ENCODE measurements at regions of chr6 and their contacts with region 1.

Region 1: DNA sequence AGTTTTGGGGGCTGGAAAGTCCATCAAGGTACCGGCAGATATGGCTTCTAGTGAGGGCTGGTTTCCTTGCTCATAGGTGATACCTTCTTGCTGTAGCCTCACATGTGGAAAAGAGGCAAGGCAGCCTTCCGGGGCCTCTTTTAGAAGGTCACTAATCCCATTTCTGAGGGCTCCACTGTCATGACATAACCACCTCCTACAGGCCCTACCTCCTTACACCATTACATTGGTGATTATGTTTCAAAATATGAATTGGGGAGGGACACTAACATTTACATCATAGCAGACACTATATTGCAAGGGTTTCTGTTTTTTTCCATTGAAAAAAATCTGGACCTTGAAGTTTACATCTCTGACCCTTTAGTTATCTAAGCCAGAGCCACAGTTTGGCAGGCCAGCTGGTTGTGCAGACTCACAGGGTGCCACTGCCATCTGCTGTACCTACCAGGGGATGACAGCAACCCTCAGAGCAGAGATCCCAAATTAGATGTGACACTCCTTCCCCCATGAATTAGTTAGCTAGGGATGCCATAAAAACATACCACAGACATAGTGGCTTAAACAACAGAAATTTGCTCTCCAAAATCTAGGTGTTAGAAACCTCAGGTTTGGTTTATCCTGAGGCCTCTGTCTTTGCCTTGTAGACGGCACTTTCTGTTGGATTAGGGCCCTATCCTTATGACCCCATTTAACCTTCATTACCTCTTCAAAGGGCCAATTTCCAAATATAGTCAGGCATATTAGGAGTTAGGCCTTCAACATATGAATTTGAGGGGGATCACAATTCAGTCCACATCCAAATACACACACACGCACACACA is 166.4 kb upstream of the RNF217 start:
- DNase-seq: peak; percentile 74
- H3K4me3 ChIP-seq: no peak overlapping the region
- H3K27ac ChIP-seq: no peak overlapping the region
- H3K4me1 ChIP-seq: peaks cover 45% of the 10 kb centered on the region
- H3K27me3 ChIP-seq: no peaks in the 10 kb centered on the region
- CTCF ChIP-seq: peak; percentile 87

Region 2: GRCh38 chr6:122869437-122870024 is 1926.3 kb before region 1 on chr6:
- CTCF ChIA-PET with region 1: interaction called, 3 read pairs
- POLR2A ChIA-PET with region 1: no interaction called
- intact Hi-C with region 1: loop called (anchors 10 kb)
- DNase-seq: peak; percentile 91
- H3K4me3 ChIP-seq: no peak overlapping the region
- H3K27ac ChIP-seq: peak overlapping the region; percentile 59
- H3K4me1 ChIP-seq: peaks cover 54% of the 10 kb centered on the region
- H3K27me3 ChIP-seq: no peaks in the 10 kb centered on the region
- CTCF ChIP-seq: peak; percentile 87

Region 3: DNA sequence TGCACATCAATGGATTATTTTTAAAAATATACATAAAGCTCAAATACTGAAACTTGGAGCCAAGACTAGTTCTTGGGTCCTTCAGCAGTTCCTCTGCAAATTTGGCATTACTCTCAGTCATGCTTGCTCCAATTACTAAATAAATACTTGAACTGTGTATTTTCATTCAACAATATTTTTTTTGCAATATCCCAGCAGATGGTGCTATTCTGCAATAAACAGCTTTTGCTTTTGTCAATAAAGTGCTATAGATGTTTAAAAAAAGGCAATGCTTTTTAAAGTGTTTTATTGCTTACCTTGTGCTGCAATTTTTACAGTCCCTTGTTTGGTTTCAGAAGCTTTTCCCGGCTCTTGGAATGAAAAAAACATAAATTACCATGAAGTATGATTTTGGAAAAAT is 1402.5 kb before region 1 on chr6:
- CTCF ChIA-PET with region 1: no interaction called
- POLR2A ChIA-PET with region 1: no interaction called
- intact Hi-C with region 1: loop called (anchors 5 kb)
- DNase-seq: peak; percentile 78
- H3K4me3 ChIP-seq: no peak overlapping the region
- H3K27ac ChIP-seq: peak overlapping the region; percentile 33
- H3K4me1 ChIP-seq: peaks cover 11% of the 10 kb centered on the region
- H3K27me3 ChIP-seq: no peaks in the 10 kb centered on the region
- CTCF ChIP-seq: peak; percentile 70

Region 4: DNA sequence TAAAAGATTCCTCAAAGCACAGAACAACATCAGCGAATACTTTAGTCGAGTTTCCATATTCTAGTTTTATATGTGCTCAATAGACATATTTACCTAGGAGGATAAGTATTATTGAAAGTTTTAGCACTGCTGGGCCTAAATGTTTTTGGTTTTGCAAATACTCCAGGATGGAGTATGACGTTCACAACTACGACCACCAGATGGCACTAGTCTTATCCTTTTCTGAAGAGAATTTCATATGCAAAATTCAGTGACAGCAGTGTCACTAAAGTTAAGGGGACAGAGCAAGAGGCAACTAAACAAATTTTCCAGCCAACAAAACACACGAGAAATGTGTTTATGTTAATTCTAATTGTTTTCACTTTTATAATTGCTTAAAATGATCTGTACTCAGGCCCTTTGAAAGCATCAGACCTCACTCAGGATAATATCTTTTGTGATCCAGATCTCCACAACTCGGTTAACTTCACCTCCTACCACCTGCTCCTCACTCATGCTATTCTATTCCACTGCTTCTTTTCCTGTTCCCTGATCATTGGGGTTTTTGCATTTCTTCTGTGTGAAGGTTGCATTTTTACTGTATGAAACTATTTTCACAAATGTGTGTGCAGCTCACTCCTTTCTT is 1379.9 kb before region 1 on chr6:
- CTCF ChIA-PET with region 1: no interaction called
- POLR2A ChIA-PET with region 1: no interaction called
- intact Hi-C with region 1: loop called (anchors 5 kb)
- DNase-seq: peak; percentile 82
- H3K4me3 ChIP-seq: no peak overlapping the region
- H3K27ac ChIP-seq: peak overlapping the region; percentile 39
- H3K4me1 ChIP-seq: peaks cover 3% of the 10 kb centered on the region
- H3K27me3 ChIP-seq: no peaks in the 10 kb centered on the region
- CTCF ChIP-seq: peak; percentile 80

Region 5: DNA sequence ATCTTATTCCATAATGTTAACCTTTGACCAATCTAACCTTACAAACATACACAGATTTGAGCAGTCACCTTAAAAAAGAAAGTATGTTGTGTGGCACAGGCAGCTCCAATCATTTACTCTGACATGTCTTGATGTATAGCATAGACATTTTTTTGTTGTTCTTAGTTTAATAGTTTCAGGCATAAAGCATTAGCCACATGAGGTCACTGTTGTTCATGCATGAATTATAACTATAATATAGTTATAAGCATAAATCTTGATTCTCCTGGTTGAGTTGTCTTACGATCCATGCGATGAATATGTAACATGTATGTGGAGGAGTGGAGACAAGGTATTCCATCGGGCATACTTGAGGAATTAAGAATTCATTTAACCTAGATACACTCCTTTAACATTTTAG is 1018.3 kb before region 1 on chr6:
- CTCF ChIA-PET with region 1: no interaction called
- POLR2A ChIA-PET with region 1: no interaction called
- intact Hi-C with region 1: loop called (anchors 2 kb)
- DNase-seq: peak; percentile 51
- H3K4me3 ChIP-seq: no peak overlapping the region
- H3K27ac ChIP-seq: no peak overlapping the region
- H3K4me1 ChIP-seq: peaks cover 22% of the 10 kb centered on the region
- H3K27me3 ChIP-seq: no peaks in the 10 kb centered on the region
- CTCF ChIP-seq: peak; percentile 56

Region 6: DNA sequence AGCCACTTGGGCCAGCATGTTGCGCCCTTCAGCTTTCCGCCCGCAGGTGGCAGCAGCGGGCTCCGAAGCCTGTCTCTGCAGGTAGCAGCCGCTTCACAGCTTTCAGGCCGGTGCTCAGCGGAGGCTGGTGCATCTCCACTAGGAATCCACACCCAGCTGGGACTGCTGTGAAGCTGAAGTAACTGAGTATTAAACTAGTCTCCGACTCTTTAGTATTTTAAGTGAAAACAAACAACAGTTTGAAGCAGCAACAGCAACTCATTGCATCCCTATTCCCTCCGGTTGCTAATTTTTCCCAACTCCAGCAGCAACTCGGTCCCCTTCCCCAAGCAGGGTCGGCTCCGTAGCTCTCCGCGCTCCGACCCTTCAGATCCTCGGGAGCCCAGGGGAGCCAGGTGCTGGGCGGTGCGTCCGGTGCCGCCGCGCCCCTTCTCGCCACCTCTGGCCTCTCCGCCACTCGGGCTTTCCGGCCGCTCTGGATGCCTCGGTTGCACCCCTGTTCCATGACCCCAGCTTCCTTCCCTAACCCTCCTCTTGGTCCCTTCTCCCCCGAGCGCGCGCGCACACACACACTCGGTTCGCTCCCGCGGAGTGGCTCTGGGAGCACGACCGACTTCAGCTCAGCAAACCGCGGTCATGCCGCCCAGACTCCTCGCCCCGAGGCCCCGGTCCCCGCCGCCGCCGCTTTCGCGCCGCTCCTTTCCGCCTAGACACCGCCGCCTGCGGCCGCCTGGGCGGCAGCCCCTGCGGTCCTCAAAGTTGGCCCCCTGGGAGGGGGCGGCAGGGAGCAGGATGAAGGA is 993.0 kb before region 1 on chr6:
- CTCF ChIA-PET with region 1: interaction called, 12 read pairs
- POLR2A ChIA-PET with region 1: no interaction called
- intact Hi-C with region 1: loop called (anchors 2 kb)
- DNase-seq: peak; percentile 91
- H3K4me3 ChIP-seq: peak overlapping the region; percentile 66
- H3K27ac ChIP-seq: peak overlapping the region; percentile 15
- H3K4me1 ChIP-seq: peaks cover 7% of the 10 kb centered on the region
- H3K27me3 ChIP-seq: peaks cover 42% of the 10 kb centered on the region
- CTCF ChIP-seq: peak; percentile 98

Region 7: GRCh38 chr6:124334359-124334758 is 461.5 kb before region 1 on chr6:
- CTCF ChIA-PET with region 1: interaction called, 3 read pairs
- POLR2A ChIA-PET with region 1: no interaction called
- intact Hi-C with region 1: loop called (anchors 10 kb)
- DNase-seq: no peak
- H3K4me3 ChIP-seq: no peak overlapping the region
- H3K27ac ChIP-seq: no peak overlapping the region
- H3K4me1 ChIP-seq: no peaks in the 10 kb centered on the region
- H3K27me3 ChIP-seq: no peaks in the 10 kb centered on the region
- CTCF ChIP-seq: no peak

Region 8: GRCh38 chr6:124769811-124770544 is 25.9 kb before region 1 on chr6:
- CTCF ChIA-PET with region 1: no interaction called
- POLR2A ChIA-PET with region 1: no interaction called
- intact Hi-C with region 1: no loop called
- DNase-seq: peak; percentile 75
- H3K4me3 ChIP-seq: no peak overlapping the region
- H3K27ac ChIP-seq: peak overlapping the region; percentile 1
- H3K4me1 ChIP-seq: peaks cover 51% of the 10 kb centered on the region
- H3K27me3 ChIP-seq: no peaks in the 10 kb centered on the region
- CTCF ChIP-seq: no peak